ENCODE measurements at regions of chr10 and their contacts with region 1.

Region 1: GRCh38 chr10:72273410-72274212 is at the start of gene DDIT4:
- DNase-seq: peak; percentile 94 to 99 (median 97)
- ATAC-seq: peak; percentile 94
- H3K4me3 ChIP-seq: peak within 1 kb of the TSS; percentile 69 to 99
- H3K4me3 Mint-ChIP-seq: peak within 1 kb of the TSS; percentile 98
- H3K27ac ChIP-seq: peak within 1 kb of the TSS; percentile 82 to 83
- H3K27ac Mint-ChIP-seq: peak within 1 kb of the TSS; percentile 93
- H3K4me1 ChIP-seq: peaks cover 30% of the 10 kb centered on the region
- H3K4me1 Mint-ChIP-seq: peaks cover 52% of the 10 kb centered on the region
- H3K27me3 ChIP-seq: no peaks in the 10 kb centered on the region
- H3K27me3 Mint-ChIP-seq: no peaks in the 10 kb centered on the region
- CTCF ChIP-seq: no peak
- total RNA-seq, gene DDIT4: 351 to 360 TPM

Region 2: DNA sequence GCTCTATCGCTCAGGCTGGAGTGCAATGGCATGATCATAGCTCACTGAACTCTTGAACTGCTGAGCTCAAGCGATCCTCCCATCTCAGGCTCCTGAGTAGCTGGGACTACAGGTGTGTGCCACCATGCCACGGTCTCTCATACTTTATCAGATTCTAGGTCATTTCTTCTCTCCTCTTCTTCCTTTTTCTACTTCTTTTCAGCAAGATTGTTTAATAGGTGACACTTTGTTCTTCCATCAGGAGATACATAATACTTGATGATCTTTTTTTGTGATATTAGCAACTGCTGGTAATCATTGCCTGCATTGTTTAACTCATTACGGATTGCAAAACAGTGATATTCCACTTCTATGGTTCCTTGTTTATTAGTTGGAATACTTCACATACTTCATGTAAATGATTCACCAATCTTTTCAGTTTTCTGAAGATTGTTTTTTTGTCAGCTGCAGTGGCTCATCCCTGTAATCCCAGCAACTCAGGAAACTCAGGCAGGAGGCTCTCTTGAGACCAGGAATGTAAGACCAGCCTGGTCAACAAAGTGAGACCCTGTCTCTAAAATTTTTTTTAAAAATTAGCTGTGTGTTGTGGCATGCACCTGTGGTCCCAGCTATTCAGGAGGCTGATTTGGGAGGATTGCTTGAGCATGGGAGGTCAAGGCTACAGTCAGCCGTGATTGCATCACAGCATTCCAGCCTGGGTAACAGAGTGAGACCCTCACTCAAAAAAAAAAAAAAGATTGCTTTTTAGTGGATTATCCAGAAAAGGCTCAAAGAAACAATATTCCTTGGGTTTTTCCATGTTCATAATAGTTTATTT is 345.6 kb before region 1 on chr10:
- CTCF ChIA-PET with region 1: no interaction called
- POLR2A ChIA-PET with region 1: no interaction called
- intact Hi-C with region 1: no loop called
- DNase-seq: no peak
- ATAC-seq: no peak
- H3K4me3 ChIP-seq: no peak overlapping the region
- H3K4me3 Mint-ChIP-seq: no peak overlapping the region
- H3K27ac ChIP-seq: no peak overlapping the region
- H3K27ac Mint-ChIP-seq: no peak overlapping the region
- H3K4me1 ChIP-seq: peaks cover 15% of the 10 kb centered on the region
- H3K4me1 Mint-ChIP-seq: peaks cover 7% of the 10 kb centered on the region
- H3K27me3 ChIP-seq: no peaks in the 10 kb centered on the region
- H3K27me3 Mint-ChIP-seq: no peaks in the 10 kb centered on the region
- CTCF ChIP-seq: no peak

Region 3: GRCh38 chr10:72088889-72089575 is 184.6 kb before region 1 on chr10:
- CTCF ChIA-PET with region 1: no interaction called
- POLR2A ChIA-PET with region 1: interaction called, 3 read pairs
- intact Hi-C with region 1: loop called in 1 of 2 experiments (anchors 1 kb)
- DNase-seq: peak in 8 of 9 experiments; percentile 37 to 84 (median 71)
- ATAC-seq: peak; percentile 56
- H3K4me3 ChIP-seq: peak overlapping the region; percentile 96 to 98
- H3K4me3 Mint-ChIP-seq: peak overlapping the region; percentile 100
- H3K27ac ChIP-seq: peak overlapping the region; percentile 96 to 98
- H3K27ac Mint-ChIP-seq: peak overlapping the region; percentile 99
- H3K4me1 ChIP-seq: peaks cover 45% of the 10 kb centered on the region
- H3K4me1 Mint-ChIP-seq: peaks cover 49% of the 10 kb centered on the region
- H3K27me3 ChIP-seq: no peaks in the 10 kb centered on the region
- H3K27me3 Mint-ChIP-seq: no peaks in the 10 kb centered on the region
- CTCF ChIP-seq: no peak

Region 4: DNA sequence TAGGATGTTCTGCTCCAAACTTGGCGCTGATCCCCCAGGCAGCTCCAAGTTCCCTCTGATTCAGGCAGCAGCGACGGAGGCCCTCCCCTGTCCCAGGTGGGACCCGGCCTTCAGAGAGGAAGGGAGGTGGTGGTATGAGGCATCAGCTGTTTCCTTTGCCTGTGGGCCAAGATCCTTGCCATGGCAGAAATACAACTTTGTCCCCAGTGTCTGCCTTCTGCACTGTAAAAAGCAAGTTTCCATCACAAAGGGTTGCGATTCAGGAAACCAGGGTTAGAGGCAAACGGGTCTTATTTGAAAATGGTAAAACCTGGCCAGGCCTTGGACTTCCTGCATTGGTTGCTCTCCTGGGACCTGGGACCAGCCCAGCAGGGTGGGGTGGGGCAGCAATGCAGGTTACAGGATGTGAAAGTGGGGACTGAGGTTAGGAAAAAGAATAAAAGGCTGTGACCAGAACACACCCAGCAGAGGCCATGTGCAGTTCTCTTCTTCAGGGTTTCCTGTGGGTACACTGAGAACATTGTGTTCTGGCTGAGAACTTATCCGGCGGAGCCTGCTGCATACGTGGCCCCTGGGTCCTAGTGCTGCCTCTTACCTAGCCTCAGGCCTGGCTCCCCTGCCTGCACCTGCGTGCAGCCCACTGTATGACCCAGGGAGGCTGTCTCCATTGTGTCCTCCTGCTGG is 25.0 kb before region 1 on chr10:
- CTCF ChIA-PET with region 1: interaction called, 28 read pairs
- POLR2A ChIA-PET with region 1: interaction called, 19 read pairs
- intact Hi-C with region 1: loop called (anchors 1 kb)
- DNase-seq: peak; percentile 40 to 91 (median 77)
- ATAC-seq: peak; percentile 88
- H3K4me3 ChIP-seq: peak overlapping the region; percentile 25 to 28
- H3K4me3 Mint-ChIP-seq: peak overlapping the region; percentile 81
- H3K27ac ChIP-seq: peak overlapping the region; percentile 61 to 64
- H3K27ac Mint-ChIP-seq: peak overlapping the region; percentile 96
- H3K4me1 ChIP-seq: peaks cover 90% of the 10 kb centered on the region
- H3K4me1 Mint-ChIP-seq: peaks cover 82% of the 10 kb centered on the region
- H3K27me3 ChIP-seq: no peaks in the 10 kb centered on the region
- H3K27me3 Mint-ChIP-seq: no peaks in the 10 kb centered on the region
- CTCF ChIP-seq: no peak

Region 5: DNA sequence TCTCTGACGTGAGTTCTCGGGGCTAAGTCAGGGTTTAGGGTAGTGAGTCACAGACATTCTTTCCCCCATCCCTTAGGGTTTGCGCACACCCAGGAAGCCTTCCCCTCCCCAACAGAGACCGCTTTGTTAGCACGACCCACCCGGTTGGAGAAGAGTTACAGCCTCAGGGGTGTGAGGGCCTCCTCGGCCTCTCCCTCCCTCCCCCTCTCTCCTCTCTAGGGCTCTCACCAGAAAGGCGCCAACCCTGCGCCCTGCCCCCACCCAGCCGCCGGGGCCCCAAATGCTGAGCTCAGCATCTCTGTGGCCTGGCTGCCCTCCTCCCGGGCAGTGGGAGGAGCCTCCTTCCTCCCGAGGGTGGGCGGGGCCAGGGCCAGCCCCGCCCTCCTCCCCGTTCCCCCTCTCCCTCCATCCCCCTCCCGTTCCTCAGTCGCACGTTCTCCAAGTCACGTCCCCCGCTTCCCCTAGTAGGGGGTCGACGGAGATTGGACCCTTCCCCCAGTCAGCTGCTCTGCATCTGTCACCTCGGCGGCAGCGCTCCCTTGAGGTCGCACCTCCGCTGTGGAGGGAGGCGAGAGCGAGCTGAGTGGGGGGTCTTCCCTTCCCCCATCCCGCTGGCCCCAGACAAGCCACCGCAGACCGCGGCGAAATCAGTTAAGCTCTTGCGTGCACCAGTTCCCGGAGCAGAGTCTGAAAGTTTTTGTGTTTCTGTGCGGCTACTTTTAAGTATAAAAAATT is 12.9 kb before region 1 on chr10:
- CTCF ChIA-PET with region 1: interaction called, 39 read pairs
- POLR2A ChIA-PET with region 1: interaction called, 14 read pairs
- intact Hi-C with region 1: loop called (anchors 1 kb)
- DNase-seq: peak; percentile 61 to 94 (median 84)
- ATAC-seq: peak; percentile 77
- H3K4me3 ChIP-seq: peak overlapping the region; percentile 56 to 69
- H3K4me3 Mint-ChIP-seq: peak overlapping the region; percentile 81
- H3K27ac ChIP-seq: peak overlapping the region; percentile 51 to 83
- H3K27ac Mint-ChIP-seq: peak overlapping the region; percentile 97
- H3K4me1 ChIP-seq: peaks cover 69% of the 10 kb centered on the region
- H3K4me1 Mint-ChIP-seq: peaks cover 69% of the 10 kb centered on the region
- H3K27me3 ChIP-seq: no peaks in the 10 kb centered on the region
- H3K27me3 Mint-ChIP-seq: no peaks in the 10 kb centered on the region
- CTCF ChIP-seq: no peak

Region 6: GRCh38 chr10:72292223-72292691 is 18.6 kb after region 1 on chr10:
- CTCF ChIA-PET with region 1: interaction called, 30 read pairs
- POLR2A ChIA-PET with region 1: interaction called, 32 read pairs
- intact Hi-C with region 1: loop called (anchors 1 kb)
- DNase-seq: no peak
- ATAC-seq: no peak
- H3K4me3 ChIP-seq: no peak overlapping the region
- H3K4me3 Mint-ChIP-seq: no peak overlapping the region
- H3K27ac ChIP-seq: no peak overlapping the region
- H3K27ac Mint-ChIP-seq: peak overlapping the region; percentile 73
- H3K4me1 ChIP-seq: peaks cover 50% of the 10 kb centered on the region
- H3K4me1 Mint-ChIP-seq: peaks cover 52% of the 10 kb centered on the region
- H3K27me3 ChIP-seq: no peaks in the 10 kb centered on the region
- H3K27me3 Mint-ChIP-seq: no peaks in the 10 kb centered on the region
- CTCF ChIP-seq: no peak

Region 7: GRCh38 chr10:72319416-72320254 is 46.0 kb after region 1 on chr10:
- CTCF ChIA-PET with region 1: interaction called, 66 read pairs
- POLR2A ChIA-PET with region 1: interaction called, 39 read pairs
- intact Hi-C with region 1: loop called (anchors 1 to 2 kb)
- DNase-seq: peak; percentile 75 to 95 (median 88)
- ATAC-seq: peak; percentile 67
- H3K4me3 ChIP-seq: peak overlapping the region; percentile 49 to 59
- H3K4me3 Mint-ChIP-seq: peak overlapping the region; percentile 74
- H3K27ac ChIP-seq: peak overlapping the region; percentile 87 to 88
- H3K27ac Mint-ChIP-seq: peak overlapping the region; percentile 98
- H3K4me1 ChIP-seq: peaks cover 92% of the 10 kb centered on the region
- H3K4me1 Mint-ChIP-seq: peaks cover 85% of the 10 kb centered on the region
- H3K27me3 ChIP-seq: no peaks in the 10 kb centered on the region
- H3K27me3 Mint-ChIP-seq: no peaks in the 10 kb centered on the region
- CTCF ChIP-seq: no peak

Region 8: DNA sequence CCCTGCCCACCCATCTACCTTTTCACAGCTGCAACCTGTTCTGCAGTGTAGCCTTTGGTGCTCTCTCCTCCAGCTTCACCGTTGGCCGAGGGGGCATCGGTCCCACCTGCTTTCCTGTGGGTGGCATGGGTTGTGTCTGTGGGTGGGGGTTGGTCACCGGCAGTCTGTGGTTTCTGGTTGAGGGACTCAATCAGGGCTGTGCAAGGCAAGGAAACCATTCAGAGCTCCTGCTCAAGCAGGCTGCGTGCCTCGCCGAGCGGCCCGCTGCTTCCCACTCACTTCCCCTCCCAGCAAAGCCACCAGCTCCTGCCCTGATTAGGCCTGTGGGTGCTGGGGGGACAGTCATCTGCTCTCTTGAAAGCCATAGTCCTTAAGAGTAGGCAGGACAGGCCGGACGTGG is 71.3 kb after region 1 on chr10:
- CTCF ChIA-PET with region 1: interaction called, 106 read pairs
- POLR2A ChIA-PET with region 1: no interaction called
- intact Hi-C with region 1: no loop called
- DNase-seq: peak in 2 of 9 experiments; percentile 14 to 25
- ATAC-seq: no peak
- H3K4me3 ChIP-seq: no peak overlapping the region
- H3K4me3 Mint-ChIP-seq: no peak overlapping the region
- H3K27ac ChIP-seq: peak overlapping the region in 1 of 2 experiments; percentile 31
- H3K27ac Mint-ChIP-seq: no peak overlapping the region
- H3K4me1 ChIP-seq: peaks cover 14% of the 10 kb centered on the region
- H3K4me1 Mint-ChIP-seq: peaks cover 23% of the 10 kb centered on the region
- H3K27me3 ChIP-seq: no peaks in the 10 kb centered on the region
- H3K27me3 Mint-ChIP-seq: no peaks in the 10 kb centered on the region
- CTCF ChIP-seq: no peak

Measured in CD8-positive, alpha-beta T cell (primary cell).